ENCODE measurements at regions of chr10 and their contacts with region 1.

Region 1: GRCh38 chr10:24642622-24643417 is 80.9 kb downstream of the ARHGAP21 start:
- DNase-seq: peak in 2 of 6 donors; percentile 30 to 57
- ATAC-seq: peak; percentile 97 to 99 (median 99)
- H3K4me3 ChIP-seq: no peak overlapping the region
- H3K27ac ChIP-seq: no peak overlapping the region
- H3K4me1 ChIP-seq: peaks cover 5 to 23% (median 18%) of the 10 kb centered on the region in 3 donors
- H3K27me3 ChIP-seq: no peaks in the 10 kb centered on the region
- CTCF ChIP-seq: peak; percentile 46 to 72 (median 52)

Region 2: DNA sequence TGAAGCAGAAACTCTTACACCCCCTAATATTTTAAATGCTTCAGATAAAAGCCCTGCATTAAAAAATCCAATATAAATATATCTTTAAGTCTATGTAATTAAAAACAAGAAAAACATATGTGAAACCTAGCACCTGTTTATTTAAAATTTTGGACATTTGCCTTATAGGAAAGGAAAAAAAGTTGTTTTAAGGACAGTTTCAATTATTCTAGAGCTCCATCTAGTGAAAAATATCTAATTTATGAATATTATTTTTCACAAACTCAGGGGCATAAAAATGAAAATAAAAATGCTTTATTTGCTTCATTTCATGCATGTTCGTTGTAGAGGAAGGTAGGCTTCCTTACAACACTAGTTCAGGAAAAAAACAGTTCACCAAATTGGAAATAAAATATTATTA is 347.0 kb after region 1 on chr10:
- intact Hi-C with region 1: loop called in 2 of 3 experiments (anchors 5 to 10 kb)
- DNase-seq: no peak
- ATAC-seq: peak in 1 of 4 donors; percentile 51
- H3K4me3 ChIP-seq: no peak overlapping the region
- H3K27ac ChIP-seq: no peak overlapping the region
- H3K4me1 ChIP-seq: peaks cover 7 to 8% (median 7%) of the 10 kb centered on the region in 3 donors
- H3K27me3 ChIP-seq: no peaks in the 10 kb centered on the region
- CTCF ChIP-seq: no peak

Region 3: DNA sequence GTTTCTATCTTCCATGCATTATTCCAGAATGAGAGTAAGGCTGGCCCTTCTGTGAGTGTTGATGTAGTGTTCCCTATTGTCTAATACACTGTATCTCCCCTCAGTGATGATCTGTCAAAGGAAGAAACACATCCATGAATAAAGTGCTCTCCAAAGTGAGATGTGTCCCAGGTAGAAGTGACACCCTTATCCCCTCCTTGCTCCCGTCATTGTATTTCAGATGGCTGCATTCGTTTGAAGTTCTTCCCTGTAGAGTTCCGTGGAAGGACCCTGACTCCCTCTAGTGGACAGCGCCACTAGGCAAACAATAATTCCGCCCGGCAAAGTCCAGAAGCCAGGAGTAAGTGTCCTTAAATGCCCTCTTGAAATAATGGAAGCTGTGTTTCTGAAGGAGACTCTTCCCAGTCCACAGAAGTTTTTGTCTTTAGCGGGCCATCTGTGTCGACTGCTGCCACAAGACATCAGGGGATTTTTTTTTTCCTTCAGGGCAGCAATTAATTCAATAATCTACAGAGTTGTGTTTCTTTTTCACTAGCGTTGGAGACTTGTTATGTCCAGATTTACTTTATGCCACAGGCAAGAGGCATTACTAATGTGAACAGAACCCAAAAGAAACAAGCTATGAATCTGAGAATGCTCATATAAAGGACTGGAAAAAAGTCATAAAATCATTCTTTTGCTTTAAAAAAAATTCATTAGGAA is 438.2 kb after region 1 on chr10:
- intact Hi-C with region 1: loop called in 1 of 3 experiments (anchors 10 kb)
- DNase-seq: peak; percentile 79 to 90 (median 80)
- ATAC-seq: peak; percentile 81 to 93 (median 92)
- H3K4me3 ChIP-seq: no peak overlapping the region
- H3K27ac ChIP-seq: peak overlapping the region in 2 of 4 donors; percentile 56 to 91
- H3K4me1 ChIP-seq: peaks cover 14 to 35% (median 17%) of the 10 kb centered on the region in 3 donors
- H3K27me3 ChIP-seq: no peaks in the 10 kb centered on the region
- CTCF ChIP-seq: peak; percentile 80 to 87 (median 82)

Measured in pancreas (tissue), 10 donors.